ENCODE measurements at regions of chr17 and their contacts with region 1.

Region 1: DNA sequence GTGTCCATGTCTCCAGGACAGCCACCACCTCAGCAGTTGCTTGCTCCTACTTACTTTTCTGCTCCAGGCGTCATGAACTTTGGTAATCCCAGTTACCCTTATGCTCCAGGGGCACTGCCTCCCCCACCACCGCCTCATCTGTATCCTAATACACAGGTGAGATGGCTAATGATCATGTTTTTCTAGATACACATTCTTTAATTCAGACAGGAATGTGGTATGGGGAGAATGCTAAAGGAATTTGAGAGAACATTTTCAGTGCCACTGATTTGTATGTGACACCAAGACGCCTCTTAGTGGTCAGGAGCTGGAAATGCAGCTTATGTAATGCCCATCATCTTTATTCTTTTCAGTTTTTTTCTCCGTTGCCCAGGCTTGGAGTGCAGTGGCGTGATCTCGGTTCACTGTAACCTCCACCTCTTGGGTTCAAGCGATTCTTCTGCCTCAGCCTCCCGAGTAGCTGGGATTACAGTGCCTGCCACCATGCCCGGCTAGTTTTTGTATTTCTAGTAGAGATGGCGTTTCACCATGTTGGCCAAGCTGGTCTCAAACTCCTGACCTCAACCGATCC is 8.9 kb upstream of the RAPGEFL1 start:
- DNase-seq: peak; percentile 88
- H3K4me3 Mint-ChIP-seq: no peak overlapping the region
- H3K27ac Mint-ChIP-seq: peak overlapping the region; percentile 4
- H3K4me1 Mint-ChIP-seq: peaks cover 17% of the 10 kb centered on the region
- H3K27me3 Mint-ChIP-seq: no peaks in the 10 kb centered on the region
- CTCF ChIP-seq: no peak

Region 2: GRCh38 chr17:40015005-40015997 is 153.0 kb before region 1 on chr17 and contains the start of gene CSF3:
- CTCF ChIA-PET with region 1: interaction called, 52 read pairs
- intact Hi-C with region 1: loop called (anchors 1 kb)
- DNase-seq: peak; percentile 66
- H3K4me3 Mint-ChIP-seq: no peak within 1 kb of the TSS
- H3K27ac Mint-ChIP-seq: no peak within 1 kb of the TSS
- H3K4me1 Mint-ChIP-seq: peaks cover 10% of the 10 kb centered on the region
- H3K27me3 Mint-ChIP-seq: peaks cover 74% of the 10 kb centered on the region
- CTCF ChIP-seq: no peak
- total RNA-seq, gene CSF3: 0.38 TPM in 1 of 2 replicates, not detected in the other

Region 3: GRCh38 chr17:40038882-40039513 is 129.3 kb before region 1 on chr17:
- CTCF ChIA-PET with region 1: interaction called, 17 read pairs
- intact Hi-C with region 1: loop called (anchors 1 kb)
- DNase-seq: peak; percentile 92
- H3K4me3 Mint-ChIP-seq: no peak overlapping the region
- H3K27ac Mint-ChIP-seq: no peak overlapping the region
- H3K4me1 Mint-ChIP-seq: peaks cover 8% of the 10 kb centered on the region
- H3K27me3 Mint-ChIP-seq: no peaks in the 10 kb centered on the region
- CTCF ChIP-seq: no peak

Region 4: DNA sequence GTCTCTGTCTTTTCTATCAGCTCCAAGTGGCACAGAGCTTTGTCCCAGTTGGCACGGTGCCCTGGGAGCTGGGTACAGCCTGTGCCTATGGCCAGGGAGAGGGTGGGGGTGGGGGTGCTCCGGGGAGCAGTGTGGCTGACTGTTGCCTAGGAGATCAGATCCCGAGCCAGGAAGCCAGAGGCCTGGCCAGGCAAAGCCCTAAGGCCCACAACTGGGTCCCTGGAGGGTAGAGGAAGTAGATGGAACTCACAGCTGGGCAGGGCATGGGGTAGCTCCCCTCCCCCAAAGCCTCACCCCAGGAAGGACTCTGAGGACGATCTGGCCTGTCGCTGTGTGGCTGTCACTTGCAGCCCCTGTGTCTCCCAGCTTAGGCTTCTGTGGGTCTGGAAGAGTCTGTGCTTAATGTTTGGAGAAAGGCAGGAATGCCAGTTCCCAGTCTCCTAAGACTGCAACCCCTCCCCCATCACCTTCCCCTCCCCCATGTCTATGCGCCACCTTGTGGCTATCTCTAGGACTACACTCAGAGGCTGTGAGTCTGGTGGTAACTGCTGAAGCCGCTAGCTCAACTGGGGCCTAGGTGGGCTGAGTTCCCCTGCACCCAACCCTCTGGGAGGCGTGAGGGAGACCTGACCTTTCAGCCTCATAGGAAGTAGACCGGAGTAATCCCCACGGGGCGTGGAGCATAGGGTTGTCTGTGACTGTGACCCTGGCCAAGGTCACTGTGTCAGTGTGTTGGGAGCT is 93.0 kb before region 1 on chr17:
- CTCF ChIA-PET with region 1: interaction called, 26 read pairs
- intact Hi-C with region 1: no loop called
- DNase-seq: peak; percentile 98
- H3K4me3 Mint-ChIP-seq: peak overlapping the region; percentile 14
- H3K27ac Mint-ChIP-seq: peak overlapping the region; percentile 6
- H3K4me1 Mint-ChIP-seq: peaks cover 70% of the 10 kb centered on the region
- H3K27me3 Mint-ChIP-seq: no peaks in the 10 kb centered on the region
- CTCF ChIP-seq: no peak

Region 5: DNA sequence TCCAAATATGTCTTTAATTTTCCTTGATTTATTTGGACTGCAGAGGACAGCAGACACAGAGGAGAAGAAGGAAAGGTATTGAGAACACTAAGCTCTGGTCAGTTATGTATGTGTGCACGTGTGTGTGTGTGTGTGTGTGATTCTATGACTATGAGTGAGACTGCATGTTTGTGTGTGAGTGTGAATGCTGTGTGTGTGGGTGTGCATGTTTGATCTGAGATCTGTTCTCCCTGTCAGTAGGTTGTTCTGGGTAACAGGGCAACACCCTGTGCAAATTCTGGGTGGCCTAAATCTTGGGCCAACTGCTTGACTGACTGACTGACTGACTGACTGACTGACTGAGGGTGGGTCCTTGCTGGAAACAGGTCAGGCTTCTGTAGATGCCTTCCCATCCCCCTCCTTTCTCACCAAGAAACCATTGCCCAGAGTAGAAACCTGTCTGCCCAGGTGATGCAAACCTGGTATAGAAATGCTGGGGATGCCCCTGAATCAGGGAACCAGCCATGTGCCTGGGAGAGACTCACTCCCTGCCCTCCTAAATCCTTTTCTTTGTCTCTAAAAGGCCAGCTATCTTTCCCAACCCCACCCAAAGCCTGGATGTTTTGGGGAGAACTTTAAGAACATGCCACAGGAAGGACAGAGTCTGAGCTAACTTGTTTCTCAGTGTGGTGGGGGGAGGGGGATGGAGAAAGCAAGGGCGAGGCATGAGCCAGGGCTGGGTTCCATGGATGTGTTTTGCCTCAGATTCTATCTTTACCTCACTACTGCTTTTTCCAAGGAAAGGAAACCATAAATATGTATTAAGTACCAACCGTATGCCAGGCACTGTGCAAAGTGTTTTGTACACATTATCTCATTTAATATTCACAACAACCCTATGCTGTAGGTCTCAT is 63.5 kb before region 1 on chr17:
- CTCF ChIA-PET with region 1: interaction called, 65 read pairs
- intact Hi-C with region 1: loop called (anchors 1 kb)
- DNase-seq: peak; percentile 88
- H3K4me3 Mint-ChIP-seq: no peak overlapping the region
- H3K27ac Mint-ChIP-seq: peak overlapping the region; percentile 0
- H3K4me1 Mint-ChIP-seq: peaks cover 92% of the 10 kb centered on the region
- H3K27me3 Mint-ChIP-seq: no peaks in the 10 kb centered on the region
- CTCF ChIP-seq: no peak

Region 6: GRCh38 chr17:40139566-40140058 is 28.7 kb before region 1 on chr17:
- CTCF ChIA-PET with region 1: interaction called, 62 read pairs
- intact Hi-C with region 1: no loop called
- DNase-seq: peak; percentile 72
- H3K4me3 Mint-ChIP-seq: peak overlapping the region; percentile 98
- H3K27ac Mint-ChIP-seq: peak overlapping the region; percentile 98
- H3K4me1 Mint-ChIP-seq: peaks cover 45% of the 10 kb centered on the region
- H3K27me3 Mint-ChIP-seq: no peaks in the 10 kb centered on the region
- CTCF ChIP-seq: no peak

Region 7: GRCh38 chr17:40182606-40183005 is 14.3 kb after region 1 on chr17:
- CTCF ChIA-PET with region 1: interaction called, 145 read pairs
- intact Hi-C with region 1: no loop called
- DNase-seq: no peak
- H3K4me3 Mint-ChIP-seq: no peak overlapping the region
- H3K27ac Mint-ChIP-seq: no peak overlapping the region
- H3K4me1 Mint-ChIP-seq: peaks cover 41% of the 10 kb centered on the region
- H3K27me3 Mint-ChIP-seq: no peaks in the 10 kb centered on the region
- CTCF ChIP-seq: no peak

Measured in Calu3 (cell line).